ENCODE measurements at regions of chr2 and their contacts with region 1.

Region 1: DNA sequence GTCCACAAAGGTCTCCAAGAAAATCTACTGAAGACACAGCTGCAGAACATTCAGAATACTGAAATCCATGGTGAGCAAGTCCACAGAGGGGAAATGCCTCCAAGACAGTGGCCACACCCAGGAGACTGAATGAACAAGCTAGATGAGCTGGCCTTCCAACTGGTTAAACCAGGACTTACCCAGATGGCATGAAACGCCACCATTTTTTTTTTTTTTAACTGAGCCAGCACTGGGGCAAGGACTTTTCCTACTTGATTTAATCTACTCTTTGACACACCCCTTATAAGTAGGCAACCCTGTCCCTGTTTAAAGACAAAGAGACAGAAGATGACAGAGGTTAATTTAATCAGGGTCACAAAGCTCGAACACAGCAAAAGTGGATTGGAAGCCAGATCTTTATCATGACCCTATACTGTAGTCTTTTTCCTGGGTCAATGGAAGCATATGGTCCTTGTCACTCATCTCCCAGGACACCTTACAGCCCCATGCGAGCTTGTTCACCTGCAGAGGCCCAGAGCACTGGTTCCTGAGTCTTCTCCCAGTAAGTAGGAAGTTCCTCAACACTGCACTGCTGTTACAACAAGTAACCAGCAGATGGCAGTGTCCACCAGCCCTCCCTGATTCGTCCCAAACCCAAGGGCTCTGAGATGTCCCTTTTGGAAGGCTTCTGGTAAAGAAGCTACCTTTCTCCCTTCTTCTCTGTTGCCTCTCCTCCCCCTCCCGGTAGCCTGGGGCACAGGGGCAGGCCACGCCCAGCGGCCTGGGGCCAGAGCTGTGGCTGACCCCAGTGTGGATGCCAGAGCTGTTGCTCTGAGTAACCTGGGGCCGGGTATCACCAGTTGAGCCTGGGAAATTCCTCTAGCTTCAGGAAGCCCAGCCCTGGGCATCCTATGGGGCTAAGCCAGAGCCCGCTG is 5.6 kb upstream of the GDF7 start:
- DNase-seq: peak; percentile 46
- ATAC-seq: peak; percentile 79
- H3K4me3 ChIP-seq: no peak overlapping the region
- H3K27ac ChIP-seq: no peak overlapping the region
- H3K4me1 ChIP-seq: peaks cover 9% of the 10 kb centered on the region; the same call in 1 of the 2 replicates
- H3K27me3 ChIP-seq: peaks cover 6 to 16% of the 10 kb centered on the region in 2 experiments
- CTCF ChIP-seq: peak; percentile 95 to 97 (median 97); a peak in 5 of 6 replicates
- EP300 ChIP-seq: no peak
- POLR2A ChIP-seq: no peak
- RAD21 ChIP-seq: peak; percentile 99

Region 2: DNA sequence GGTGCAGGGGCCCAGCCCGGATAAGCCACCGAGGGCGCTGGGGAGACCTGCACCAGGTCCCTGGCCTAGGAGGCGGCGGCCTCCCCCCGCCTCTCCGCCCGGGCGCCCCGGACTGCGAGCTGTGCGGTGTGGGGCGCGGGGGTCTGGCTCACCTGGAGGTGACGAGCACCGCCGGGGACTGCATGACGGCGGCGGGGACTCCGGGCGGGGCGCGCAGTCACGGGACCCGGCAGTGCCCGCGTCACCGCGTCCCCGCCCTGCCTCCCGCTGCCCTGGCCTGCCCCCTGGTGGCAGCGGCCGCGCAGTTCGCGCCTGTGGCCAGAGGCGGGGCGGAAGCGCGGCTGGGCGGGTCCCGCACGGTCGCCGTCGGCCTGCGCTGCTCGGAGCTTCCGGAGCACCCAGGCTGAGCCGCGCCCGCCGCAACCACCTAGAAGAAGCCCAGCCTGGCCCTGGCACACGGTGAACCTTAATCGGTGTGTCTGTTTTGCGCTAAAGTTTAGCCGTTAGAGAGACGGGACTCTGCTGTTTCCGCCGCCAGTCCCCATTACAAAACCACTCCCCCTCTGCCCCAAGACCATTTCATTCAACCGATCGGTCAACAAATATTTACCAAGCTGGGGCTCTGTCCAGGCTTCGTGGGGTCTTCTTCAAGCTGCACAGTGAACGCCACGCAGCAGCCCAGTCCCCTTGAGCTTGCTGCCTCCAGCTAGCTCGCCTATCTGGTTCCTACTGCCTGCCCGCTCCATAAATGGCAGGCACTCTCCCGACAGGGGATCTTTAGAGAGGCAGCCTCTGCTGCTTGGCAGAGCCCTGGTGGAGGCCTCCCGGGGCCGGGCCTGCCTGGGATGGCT is 10.2 kb before region 1 on chr2 and contains the start of gene HS1BP3:
- CTCF ChIA-PET with region 1: interaction called, 28 read pairs
- POLR2A ChIA-PET with region 1: no interaction called
- RAD21 ChIA-PET with region 1: interaction called, 16 read pairs
- SMC1A ChIA-PET with region 1: interaction called, 7 read pairs
- in situ Hi-C with region 1: no loop called
- intact Hi-C with region 1: no loop called
- DNase-seq: peak; percentile 43
- ATAC-seq: peak; percentile 98
- H3K4me3 ChIP-seq: peak within 1 kb of the TSS; percentile 96
- H3K27ac ChIP-seq: no peak within 1 kb of the TSS; the same call in 1 of the 2 replicates
- H3K4me1 ChIP-seq: peaks cover 4% of the 10 kb centered on the region
- H3K27me3 ChIP-seq: peaks cover 0 to 1% of the 10 kb centered on the region in 2 experiments; a peak in 1 of 4 replicates
- CTCF ChIP-seq: peak; percentile 72 to 97 (median 91); a peak in 4 of 6 replicates
- EP300 ChIP-seq: no peak
- POLR2A ChIP-seq: peak; percentile 89
- RAD21 ChIP-seq: peak; percentile 68
- polyA plus RNA-seq, gene HS1BP3: 0.47 to 0.57 TPM

Region 3: DNA sequence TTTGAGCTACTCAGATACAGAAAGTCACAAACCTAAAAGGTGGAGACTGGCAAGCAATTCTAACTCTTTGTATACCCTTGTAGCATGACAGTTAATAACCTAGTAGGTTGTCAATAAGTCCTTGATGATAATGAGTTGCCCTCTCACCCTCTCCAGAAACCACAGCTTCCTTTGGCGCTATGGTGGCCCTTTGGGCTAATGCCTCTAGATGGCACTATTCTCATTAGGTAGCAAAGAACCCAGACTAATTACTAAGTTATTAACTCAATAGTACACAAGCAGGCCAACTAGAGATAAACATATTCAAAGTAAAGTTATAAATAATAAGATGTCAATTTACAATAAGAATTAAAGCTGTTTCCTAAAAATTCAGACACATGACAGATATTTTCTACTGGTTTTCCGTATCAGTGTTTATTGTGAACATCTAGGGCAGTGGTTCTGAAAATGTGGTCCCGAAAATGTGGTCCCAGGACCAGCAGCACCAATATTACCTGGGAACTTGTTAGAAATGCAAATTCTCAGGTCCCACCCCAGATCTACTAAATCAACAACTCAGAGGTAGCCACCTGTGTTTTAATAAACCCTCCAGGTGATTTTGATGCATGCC is 120.4 kb after region 1 on chr2:
- CTCF ChIA-PET with region 1: interaction called, 32 read pairs
- POLR2A ChIA-PET with region 1: no interaction called
- RAD21 ChIA-PET with region 1: interaction called, 3 read pairs
- SMC1A ChIA-PET with region 1: interaction called, 4 read pairs
- in situ Hi-C with region 1: no loop called
- intact Hi-C with region 1: no loop called
- DNase-seq: no peak
- ATAC-seq: peak; percentile 87
- H3K4me3 ChIP-seq: no peak overlapping the region
- H3K27ac ChIP-seq: no peak overlapping the region
- H3K4me1 ChIP-seq: no peaks in the 10 kb centered on the region
- H3K27me3 ChIP-seq: no peaks in the 10 kb centered on the region
- CTCF ChIP-seq: peak; percentile 67 to 69 (median 68)
- EP300 ChIP-seq: no peak
- POLR2A ChIP-seq: no peak
- RAD21 ChIP-seq: peak; percentile 75

Region 4: DNA sequence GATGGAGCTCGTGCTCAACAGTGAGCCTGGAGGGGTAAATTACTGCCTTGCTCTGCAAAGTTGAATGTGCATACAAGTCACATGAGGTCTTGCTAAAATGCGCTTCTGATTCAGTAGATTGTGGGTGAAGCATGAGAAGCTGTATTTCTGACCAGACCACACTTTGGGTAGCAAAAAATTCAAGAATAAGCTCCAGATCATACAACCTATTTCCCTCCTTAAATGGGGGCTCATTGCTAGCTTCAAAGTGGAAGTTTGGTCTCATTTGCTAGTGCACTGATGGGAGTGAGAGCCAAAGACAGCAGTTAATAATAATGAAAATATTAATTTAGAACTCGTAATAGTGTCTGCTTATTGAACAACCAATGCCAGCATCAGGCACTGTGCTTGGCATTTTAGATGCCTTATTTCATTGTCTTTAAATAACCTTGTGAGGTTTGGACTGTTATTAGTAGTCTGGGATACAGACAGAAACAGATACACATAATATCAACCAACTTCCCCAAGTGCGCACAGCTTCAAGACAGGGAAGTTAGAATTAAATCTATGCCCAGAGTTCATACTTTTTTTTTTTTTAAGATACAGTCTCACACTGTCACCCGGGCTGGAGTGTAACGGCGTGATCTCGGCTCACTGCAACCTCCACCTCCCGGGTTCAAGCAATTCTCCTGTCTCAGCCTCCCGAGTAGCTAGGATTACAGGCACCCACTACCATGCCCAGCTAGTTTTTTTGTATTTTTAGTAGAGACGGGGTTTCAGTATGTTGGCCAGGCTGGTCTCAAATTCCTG is 364.6 kb after region 1 on chr2:
- CTCF ChIA-PET with region 1: interaction called, 24 read pairs
- POLR2A ChIA-PET with region 1: no interaction called
- RAD21 ChIA-PET with region 1: interaction called, 4 read pairs
- SMC1A ChIA-PET with region 1: interaction called, 16 read pairs
- in situ Hi-C with region 1: no loop called
- intact Hi-C with region 1: loop called (anchors 1 kb)
- DNase-seq: no peak
- ATAC-seq: no peak
- H3K4me3 ChIP-seq: no peak overlapping the region
- H3K27ac ChIP-seq: no peak overlapping the region
- H3K4me1 ChIP-seq: no peaks in the 10 kb centered on the region
- H3K27me3 ChIP-seq: 0 out of 4 replicates have a peak, but pooled peaks cover 0 to 2% of the 10 kb centered on the region in 2 experiments
- CTCF ChIP-seq: no peak
- EP300 ChIP-seq: no peak
- POLR2A ChIP-seq: no peak
- RAD21 ChIP-seq: no peak

Region 5: DNA sequence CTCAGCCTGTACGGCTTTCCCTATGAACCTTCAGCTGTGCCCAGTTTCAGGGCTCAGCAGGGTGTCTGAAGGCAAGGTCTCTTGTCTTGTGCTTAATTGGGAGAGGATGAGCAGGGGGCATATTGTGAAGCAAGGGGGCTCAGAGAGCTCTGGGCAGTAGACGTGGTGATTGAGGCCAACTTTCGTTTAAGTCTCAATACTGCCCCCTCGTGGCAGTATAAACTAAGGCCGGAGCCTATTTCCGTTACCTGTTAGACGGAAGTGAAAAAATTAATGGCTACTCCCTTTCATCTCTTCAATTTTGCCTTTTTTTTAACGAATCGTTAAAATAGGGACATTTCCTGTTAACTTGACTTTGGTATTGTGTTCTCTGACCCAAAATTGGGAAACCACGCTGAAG is 655.8 kb after region 1 on chr2:
- CTCF ChIA-PET with region 1: interaction called, 10 read pairs
- POLR2A ChIA-PET with region 1: no interaction called
- RAD21 ChIA-PET with region 1: interaction called, 3 read pairs
- SMC1A ChIA-PET with region 1: no interaction called
- in situ Hi-C with region 1: no loop called
- intact Hi-C with region 1: no loop called
- DNase-seq: no peak
- ATAC-seq: peak; percentile 86
- H3K4me3 ChIP-seq: no peak overlapping the region
- H3K27ac ChIP-seq: no peak overlapping the region
- H3K4me1 ChIP-seq: no peaks in the 10 kb centered on the region
- H3K27me3 ChIP-seq: no peaks in the 10 kb centered on the region; a peak in 1 of 4 replicates
- CTCF ChIP-seq: peak; percentile 56 to 61 (median 58)
- EP300 ChIP-seq: no peak
- POLR2A ChIP-seq: no peak
- RAD21 ChIP-seq: peak; percentile 48; the same call in 1 of the 2 replicates

Measured in GM12878 (cell line).